ENCODE measurements at regions of chr1 and their contacts with region 1.

Region 1: DNA sequence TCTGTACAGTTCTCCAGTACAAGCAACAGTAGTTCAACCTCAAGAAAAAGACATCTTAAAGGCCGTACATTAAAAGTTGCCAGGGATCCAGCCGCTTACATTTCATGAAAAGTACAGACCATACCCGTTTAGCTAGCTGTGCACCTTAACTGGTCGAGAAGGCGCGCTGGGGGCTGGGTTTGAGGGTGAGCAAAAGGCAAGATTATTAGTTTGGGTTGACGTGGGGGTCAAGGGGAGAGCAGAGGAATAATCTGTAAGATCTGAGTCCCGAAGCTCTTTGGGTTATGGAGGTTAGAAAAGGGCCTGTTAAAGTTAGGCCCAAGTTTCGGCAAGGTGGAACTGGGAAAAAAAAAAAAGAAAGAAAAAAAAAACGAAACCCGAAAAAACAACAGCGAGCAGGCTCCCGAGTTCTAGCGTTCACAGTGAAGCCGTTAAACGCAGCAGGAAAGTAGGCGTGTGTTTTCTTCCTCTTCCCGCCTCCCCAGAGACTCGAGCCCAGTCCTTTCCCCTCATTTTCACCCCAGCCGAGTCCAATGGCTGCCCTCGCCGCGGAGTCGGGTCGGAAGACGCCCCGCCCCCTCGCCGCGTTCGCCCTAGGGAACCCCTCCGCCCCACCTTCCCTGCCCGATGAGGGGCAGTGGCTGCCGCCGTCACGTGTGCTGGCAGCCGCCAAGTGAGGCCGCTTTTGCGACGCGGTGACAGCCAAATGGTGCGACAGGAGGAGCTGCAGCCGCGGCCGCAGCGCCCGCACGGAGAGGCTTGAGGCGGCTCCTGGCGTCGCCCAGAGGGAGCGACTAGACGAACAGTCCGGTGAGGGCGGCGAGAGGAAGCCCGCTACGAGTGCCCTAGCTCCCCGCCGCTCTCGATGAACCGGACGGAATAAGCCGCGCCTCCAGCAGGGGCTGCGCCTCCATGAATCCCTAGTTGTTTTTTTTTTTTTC is at the start of gene PKN2:
- DNase-seq: peak; percentile 96
- ATAC-seq: peak; percentile 93
- H3K4me3 ChIP-seq: peak within 1 kb of the TSS; percentile 97 to 99 (median 97)
- H3K27ac ChIP-seq: peak within 1 kb of the TSS; percentile 99
- H3K4me1 ChIP-seq: peaks cover 27% of the 10 kb centered on the region
- H3K27me3 ChIP-seq: no peaks in the 10 kb centered on the region; a peak in 1 of 5 replicates
- CTCF ChIP-seq: peak; percentile 61
- EP300 ChIP-seq: no peak; a peak in 1 of 4 replicates
- POLR2A ChIP-seq: peak; percentile 90 to 94
- RAD21 ChIP-seq: no peak
- total RNA-seq, gene PKN2: 29.4 and 45.4 TPM in 2 replicates

Region 2: GRCh38 chr1:88529581-88529980 is 154.2 kb before region 1 on chr1:
- CTCF ChIA-PET with region 1: no interaction called
- POLR2A ChIA-PET with region 1: no interaction called
- in situ Hi-C with region 1: no loop called
- intact Hi-C with region 1: no loop called
- DNase-seq: no peak
- ATAC-seq: no peak
- H3K4me3 ChIP-seq: no peak overlapping the region
- H3K27ac ChIP-seq: no peak overlapping the region
- H3K4me1 ChIP-seq: 0 out of 2 replicates have a peak, but pooled peaks cover 4% of the 10 kb centered on the region
- H3K27me3 ChIP-seq: no peaks in the 10 kb centered on the region
- CTCF ChIP-seq: no peak
- EP300 ChIP-seq: no peak
- POLR2A ChIP-seq: no peak
- RAD21 ChIP-seq: no peak

Region 3: GRCh38 chr1:88595355-88596002 is 88.3 kb before region 1 on chr1:
- CTCF ChIA-PET with region 1: no interaction called
- POLR2A ChIA-PET with region 1: no interaction called
- in situ Hi-C with region 1: no loop called
- intact Hi-C with region 1: no loop called
- DNase-seq: peak; percentile 65
- ATAC-seq: peak; percentile 73
- H3K4me3 ChIP-seq: no peak overlapping the region
- H3K27ac ChIP-seq: no peak overlapping the region
- H3K4me1 ChIP-seq: no peaks in the 10 kb centered on the region
- H3K27me3 ChIP-seq: no peaks in the 10 kb centered on the region
- CTCF ChIP-seq: peak; percentile 71
- EP300 ChIP-seq: no peak
- POLR2A ChIP-seq: no peak
- RAD21 ChIP-seq: peak; percentile 42; the same call in 1 of the 2 replicates

Region 4: DNA sequence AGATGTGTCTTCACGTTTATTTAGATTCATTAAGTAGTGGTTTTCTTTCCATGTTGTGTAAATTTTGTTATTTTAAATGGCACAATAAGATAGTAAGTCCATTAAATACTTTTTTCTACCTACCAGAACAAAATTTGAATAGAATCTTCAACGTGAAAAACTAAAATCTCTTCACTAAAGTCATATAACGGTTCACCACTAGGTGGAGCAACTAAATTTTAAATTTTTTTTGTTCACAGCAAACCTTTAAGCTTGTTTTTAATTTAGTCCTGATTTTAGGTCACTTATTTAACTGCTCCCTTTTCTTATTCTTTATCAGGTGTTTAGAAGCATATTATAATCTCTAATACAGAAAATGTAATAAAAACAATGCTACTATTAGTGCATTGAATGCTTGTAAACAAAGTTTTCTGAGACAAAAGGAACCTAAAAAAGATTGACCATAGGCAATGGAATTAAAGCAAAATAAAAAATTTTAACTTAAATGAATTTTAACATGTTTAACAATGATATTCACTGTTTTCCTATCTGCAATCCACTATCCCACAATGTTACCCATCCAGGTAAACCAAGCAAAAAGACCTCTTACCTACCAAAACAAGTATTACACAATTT is 28.0 kb before region 1 on chr1:
- CTCF ChIA-PET with region 1: no interaction called
- POLR2A ChIA-PET with region 1: interaction called, 3 read pairs
- in situ Hi-C with region 1: no loop called
- intact Hi-C with region 1: loop called (anchors 1 kb)
- DNase-seq: peak; percentile 10
- ATAC-seq: no peak
- H3K4me3 ChIP-seq: no peak overlapping the region
- H3K27ac ChIP-seq: no peak overlapping the region
- H3K4me1 ChIP-seq: peaks cover 13% of the 10 kb centered on the region
- H3K27me3 ChIP-seq: no peaks in the 10 kb centered on the region
- CTCF ChIP-seq: no peak; the same call in 1 of the 2 replicates
- EP300 ChIP-seq: no peak
- POLR2A ChIP-seq: no peak
- RAD21 ChIP-seq: no peak

Region 5: GRCh38 chr1:88701275-88701674 is 17.5 kb after region 1 on chr1:
- CTCF ChIA-PET with region 1: no interaction called
- POLR2A ChIA-PET with region 1: interaction called, 16 read pairs
- in situ Hi-C with region 1: no loop called
- intact Hi-C with region 1: no loop called
- DNase-seq: no peak
- ATAC-seq: no peak
- H3K4me3 ChIP-seq: no peak overlapping the region
- H3K27ac ChIP-seq: no peak overlapping the region
- H3K4me1 ChIP-seq: peaks cover 42% of the 10 kb centered on the region
- H3K27me3 ChIP-seq: no peaks in the 10 kb centered on the region
- CTCF ChIP-seq: no peak
- EP300 ChIP-seq: no peak
- POLR2A ChIP-seq: no peak
- RAD21 ChIP-seq: no peak

Measured in HepG2 (cell line).